H1 (cell line): ENCODE measurements at regions of chr17 and their contacts with region 1.

Region 1: GRCh38 chr17:27601069-27601975 is 29.7 kb upstream of the LGALS9 start:
- DNase-seq: peak; percentile 68 to 95
- H3K4me3 ChIP-seq: no peak overlapping the region
- H3K27ac ChIP-seq: no peak overlapping the region
- H3K4me1 ChIP-seq: no peaks in the 10 kb centered on the region; a peak in 1 of 7 replicates
- H3K27me3 ChIP-seq: no peaks in the 10 kb centered on the region
- CTCF ChIP-seq: peak; percentile 54 to 87 (median 87)
- EP300 ChIP-seq: peak in 1 of 2 experiments; percentile 33; a peak in 1 of 3 replicates
- POLR2A ChIP-seq: no peak
- RAD21 ChIP-seq: peak; percentile 90 to 93

Region 2: GRCh38 chr17:27236717-27237315 is 364.5 kb before region 1 on chr17:
- CTCF ChIA-PET with region 1: interaction called, 15 read pairs
- POLR2A ChIA-PET with region 1: no interaction called
- DNase-seq: peak in 1 of 2 experiments; percentile 86
- H3K4me3 ChIP-seq: no peak overlapping the region
- H3K27ac ChIP-seq: no peak overlapping the region
- H3K4me1 ChIP-seq: no peaks in the 10 kb centered on the region; a peak in 1 of 7 replicates
- H3K27me3 ChIP-seq: no peaks in the 10 kb centered on the region
- CTCF ChIP-seq: peak in 2 of 3 experiments; percentile 66 to 75; a peak in 3 of 4 replicates
- EP300 ChIP-seq: no peak
- POLR2A ChIP-seq: no peak
- RAD21 ChIP-seq: peak; percentile 82 to 84

Region 3: DNA sequence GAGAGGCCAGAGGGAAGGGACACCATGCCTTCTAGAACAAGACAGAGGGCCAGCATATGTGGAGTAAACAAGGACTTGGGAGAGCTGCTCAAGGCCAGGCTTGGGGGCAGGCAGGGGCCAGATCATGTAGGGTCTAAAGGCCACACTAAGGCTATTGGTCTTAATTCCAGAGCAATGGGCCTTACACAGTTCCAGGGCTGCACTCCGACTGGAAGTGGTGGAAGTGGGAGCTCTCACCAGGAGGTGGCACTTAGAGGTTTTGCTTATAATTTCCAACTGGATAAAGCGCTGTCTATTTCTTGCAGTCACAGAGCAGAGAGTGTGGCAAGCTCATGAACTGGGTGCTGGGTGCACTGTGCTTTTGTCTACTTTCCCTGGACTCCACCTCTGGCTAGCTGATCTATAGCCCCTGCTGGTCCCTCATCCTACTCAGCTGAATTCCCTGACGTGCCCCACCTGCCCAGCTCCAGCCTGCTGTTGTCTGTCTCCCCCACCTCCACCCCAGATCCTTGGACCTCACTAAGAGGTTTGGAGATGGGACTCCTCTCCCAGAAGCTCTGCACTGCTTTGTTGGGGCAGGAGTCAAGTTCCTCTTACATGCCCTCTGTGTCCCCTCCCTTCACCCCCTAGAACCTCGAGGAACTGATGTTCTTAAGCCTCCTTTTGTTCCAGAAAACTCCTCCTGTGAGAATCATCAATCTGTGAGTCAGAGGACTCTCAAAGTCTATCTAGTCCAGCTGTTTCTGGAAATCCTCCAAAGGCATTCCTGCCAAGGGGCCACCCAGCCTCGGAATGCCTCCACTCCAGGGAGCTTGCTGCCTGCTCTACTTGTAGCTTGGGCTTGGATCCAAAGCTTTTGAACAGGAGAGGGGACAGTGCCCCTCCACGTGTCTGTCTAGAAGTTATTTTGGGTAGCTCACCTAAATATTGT is 193.1 kb before region 1 on chr17:
- CTCF ChIA-PET with region 1: interaction called, 20 read pairs
- POLR2A ChIA-PET with region 1: no interaction called
- DNase-seq: no peak
- H3K4me3 ChIP-seq: no peak overlapping the region
- H3K27ac ChIP-seq: no peak overlapping the region
- H3K4me1 ChIP-seq: peaks cover 0 to 4% (median under 1%) of the 10 kb centered on the region in 4 experiments; a peak in 1 of 7 replicates
- H3K27me3 ChIP-seq: 0 out of 7 replicates have a peak, but pooled peaks cover 0 to 4% (median 0%) of the 10 kb centered on the region in 4 experiments
- CTCF ChIP-seq: no peak
- EP300 ChIP-seq: no peak
- POLR2A ChIP-seq: no peak
- RAD21 ChIP-seq: no peak

Region 4: GRCh38 chr17:27455914-27456680 is 145.2 kb before region 1 on chr17 and contains the start of gene KSR1:
- CTCF ChIA-PET with region 1: interaction called, 209 read pairs
- POLR2A ChIA-PET with region 1: no interaction called
- DNase-seq: peak; percentile 53 to 90
- H3K4me3 ChIP-seq: peak within 1 kb of the TSS; percentile 50 to 82 (median 65)
- H3K27ac ChIP-seq: peak within 1 kb of the TSS; percentile 65; the same call in 1 of the 2 replicates
- H3K4me1 ChIP-seq: peaks cover 2 to 30% (median 11%) of the 10 kb centered on the region in 4 experiments
- H3K27me3 ChIP-seq: peaks cover 0 to 9% (median 5%) of the 10 kb centered on the region in 4 experiments; a peak in 4 of 7 replicates
- CTCF ChIP-seq: peak; percentile 62 to 78 (median 67)
- EP300 ChIP-seq: no peak
- POLR2A ChIP-seq: peak in 1 of 2 experiments; percentile 58; a peak in 2 of 3 replicates
- RAD21 ChIP-seq: peak; percentile 71 to 79
- total RNA-seq, gene KSR1: 33.9 and 34.7 TPM in 2 replicates

Region 5: DNA sequence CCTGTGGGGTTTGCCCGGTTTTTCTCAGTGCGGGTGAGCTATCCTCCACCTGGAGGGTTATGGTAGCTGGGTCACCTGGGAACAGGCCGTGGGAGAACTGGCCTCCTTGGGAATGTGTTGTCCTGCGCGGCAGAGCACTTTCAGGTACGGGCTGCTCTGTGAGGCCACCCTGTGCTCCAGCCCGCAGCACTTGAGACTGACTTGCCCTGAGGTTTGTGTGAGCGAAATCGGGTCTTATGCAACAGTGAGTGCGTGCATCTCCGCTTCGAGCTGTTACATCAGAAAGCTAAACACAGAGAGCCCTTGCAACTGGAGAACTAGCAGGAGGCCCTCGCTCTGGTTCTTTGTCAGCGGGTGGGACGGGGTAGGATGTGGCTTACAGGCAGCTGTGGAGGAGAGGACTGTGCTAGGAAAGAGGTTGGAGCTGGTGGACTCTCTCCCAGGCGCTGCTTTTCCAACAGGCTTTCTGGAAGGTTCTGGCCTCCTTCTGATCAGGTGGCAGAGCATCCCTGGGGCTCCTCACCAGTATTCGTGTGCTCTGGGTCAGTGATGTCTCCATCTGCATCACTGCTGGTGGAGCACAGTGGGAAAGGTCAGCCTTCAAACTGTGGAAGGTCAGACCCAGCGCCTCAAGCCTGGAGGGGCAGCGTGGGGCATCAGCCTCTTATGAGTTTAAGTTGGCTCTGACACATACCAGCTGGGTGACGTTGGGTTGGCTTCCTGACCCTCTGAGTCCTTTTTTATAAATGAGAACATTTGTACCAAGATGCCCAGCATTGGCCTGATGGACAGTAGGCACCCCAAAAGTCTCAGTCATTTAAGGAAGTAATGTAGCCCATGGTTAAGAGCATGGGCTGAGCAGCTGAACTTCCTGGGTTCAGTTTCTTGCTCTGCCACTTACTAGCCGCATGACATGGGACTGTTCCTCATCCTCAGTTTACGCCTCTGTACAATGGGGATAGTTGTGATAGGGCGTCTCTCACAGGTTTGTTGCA is 68.8 kb before region 1 on chr17:
- CTCF ChIA-PET with region 1: interaction called, 25 read pairs
- POLR2A ChIA-PET with region 1: interaction called, 3 read pairs
- DNase-seq: no peak
- H3K4me3 ChIP-seq: no peak overlapping the region
- H3K27ac ChIP-seq: no peak overlapping the region
- H3K4me1 ChIP-seq: peaks cover 2 to 20% (median 8%) of the 10 kb centered on the region in 4 experiments
- H3K27me3 ChIP-seq: no peaks in the 10 kb centered on the region
- CTCF ChIP-seq: no peak
- EP300 ChIP-seq: no peak
- POLR2A ChIP-seq: no peak
- RAD21 ChIP-seq: no peak

Region 6: GRCh38 chr17:27569257-27569722 is 32.0 kb before region 1 on chr17:
- CTCF ChIA-PET with region 1: interaction called, 39 read pairs
- POLR2A ChIA-PET with region 1: no interaction called
- DNase-seq: peak; percentile 51 to 81
- H3K4me3 ChIP-seq: no peak overlapping the region
- H3K27ac ChIP-seq: no peak overlapping the region
- H3K4me1 ChIP-seq: peaks cover 2 to 14% (median 6%) of the 10 kb centered on the region in 4 experiments; a peak in 5 of 7 replicates
- H3K27me3 ChIP-seq: no peaks in the 10 kb centered on the region
- CTCF ChIP-seq: peak; percentile 74 to 95 (median 92)
- EP300 ChIP-seq: no peak
- POLR2A ChIP-seq: no peak
- RAD21 ChIP-seq: peak; percentile 55 to 66

Region 7: GRCh38 chr17:27616414-27616813 is 15.1 kb after region 1 on chr17:
- CTCF ChIA-PET with region 1: interaction called, 35 read pairs
- POLR2A ChIA-PET with region 1: no interaction called
- DNase-seq: no peak
- H3K4me3 ChIP-seq: no peak overlapping the region
- H3K27ac ChIP-seq: no peak overlapping the region
- H3K4me1 ChIP-seq: no peaks in the 10 kb centered on the region
- H3K27me3 ChIP-seq: no peaks in the 10 kb centered on the region
- CTCF ChIP-seq: no peak
- EP300 ChIP-seq: no peak
- POLR2A ChIP-seq: no peak
- RAD21 ChIP-seq: no peak

Region 8: GRCh38 chr17:27733773-27734172 is 132.5 kb after region 1 on chr17:
- CTCF ChIA-PET with region 1: no interaction called
- POLR2A ChIA-PET with region 1: no interaction called
- DNase-seq: no peak
- H3K4me3 ChIP-seq: no peak overlapping the region
- H3K27ac ChIP-seq: no peak overlapping the region
- H3K4me1 ChIP-seq: no peaks in the 10 kb centered on the region
- H3K27me3 ChIP-seq: no peaks in the 10 kb centered on the region
- CTCF ChIP-seq: no peak
- EP300 ChIP-seq: no peak
- POLR2A ChIP-seq: no peak
- RAD21 ChIP-seq: no peak